HAP-1 (cell line): ENCODE measurements at regions of chr17 and their contacts with region 1.

Region 1: DNA sequence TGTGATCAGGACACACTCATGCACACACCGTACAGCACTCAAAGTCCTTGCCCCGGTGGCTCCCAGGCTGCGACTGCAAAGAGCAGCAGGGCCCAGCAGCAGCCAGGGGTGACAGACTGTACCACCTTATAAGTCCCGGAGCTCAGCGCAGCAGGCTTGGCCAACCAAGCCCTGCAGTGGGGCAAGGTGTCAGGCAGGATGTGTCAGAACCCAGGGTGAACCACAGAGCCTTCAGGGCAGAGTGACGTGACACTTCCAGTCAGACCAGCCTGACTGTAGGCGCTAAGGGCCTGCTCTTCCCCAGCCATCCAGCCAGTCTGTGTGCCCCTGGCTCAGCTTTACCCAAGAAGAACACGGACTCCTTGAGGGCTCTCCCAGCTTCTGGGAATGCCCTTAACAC is 204.1 kb downstream of the COPRS start:
- DNase-seq: no peak
- H3K4me3 ChIP-seq: no peak overlapping the region
- H3K4me1 ChIP-seq: no peaks in the 10 kb centered on the region
- H3K27me3 ChIP-seq: peaks cover 6% of the 10 kb centered on the region; the same call in 1 of the 2 replicates

Region 2: GRCh38 chr17:31404028-31404954 is 250.6 kb before region 1 on chr17:
- in situ Hi-C with region 1: no loop called
- DNase-seq: no peak
- H3K4me3 ChIP-seq: no peak overlapping the region
- H3K4me1 ChIP-seq: no peaks in the 10 kb centered on the region
- H3K27me3 ChIP-seq: no peaks in the 10 kb centered on the region

Region 3: GRCh38 chr17:31811101-31811500 is 156.2 kb after region 1 on chr17:
- in situ Hi-C with region 1: loop called (anchors 10 kb)
- DNase-seq: no peak
- H3K4me3 ChIP-seq: no peak overlapping the region
- H3K4me1 ChIP-seq: no peaks in the 10 kb centered on the region
- H3K27me3 ChIP-seq: no peaks in the 10 kb centered on the region